ENCODE measurements at regions of chr6 and their contacts with region 1.

Region 1: GRCh38 chr6:149513915-149514314 is 29.1 kb upstream of the ZC3H12D start:
- DNase-seq: no peak
- ATAC-seq: no peak
- H3K4me3 ChIP-seq: no peak overlapping the region
- H3K27ac ChIP-seq: no peak overlapping the region
- H3K4me1 ChIP-seq: no peaks in the 10 kb centered on the region
- H3K27me3 ChIP-seq: no peaks in the 10 kb centered on the region
- CTCF ChIP-seq: no peak
- POLR2A ChIP-seq: no peak
- RAD21 ChIP-seq: no peak

Region 2: DNA sequence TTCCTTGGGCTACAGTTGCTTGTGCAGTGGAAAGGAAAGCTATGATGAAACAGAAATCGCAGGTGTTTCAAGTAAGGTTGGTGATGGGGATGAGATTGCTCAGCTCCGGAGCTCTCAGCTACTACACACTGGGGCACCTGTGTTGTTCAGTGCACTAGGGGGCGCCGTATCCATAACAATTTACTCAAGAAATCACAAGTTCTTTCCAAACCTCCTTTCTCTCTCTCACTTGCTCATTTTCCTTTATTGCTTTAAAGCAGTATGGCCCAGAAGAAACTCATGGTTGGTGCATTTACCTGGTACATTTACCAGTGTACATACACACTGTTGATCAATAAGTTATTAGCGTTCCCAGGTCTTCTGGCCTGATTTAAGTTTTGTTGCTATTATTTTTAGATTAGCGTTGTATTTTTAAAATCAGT is 431.6 kb before region 1 on chr6:
- CTCF ChIA-PET with region 1: interaction called, 7 read pairs
- POLR2A ChIA-PET with region 1: no interaction called
- RAD21 ChIA-PET with region 1: no interaction called
- intact Hi-C with region 1: loop called (anchors 1 kb)
- DNase-seq: peak; percentile 57
- ATAC-seq: peak; percentile 97
- H3K4me3 ChIP-seq: no peak overlapping the region
- H3K27ac ChIP-seq: no peak overlapping the region
- H3K4me1 ChIP-seq: no peaks in the 10 kb centered on the region; a peak in 1 of 4 replicates
- H3K27me3 ChIP-seq: no peaks in the 10 kb centered on the region
- CTCF ChIP-seq: peak; percentile 68 to 84 (median 79); a peak in 5 of 6 replicates
- POLR2A ChIP-seq: no peak
- RAD21 ChIP-seq: peak; percentile 95

Region 3: DNA sequence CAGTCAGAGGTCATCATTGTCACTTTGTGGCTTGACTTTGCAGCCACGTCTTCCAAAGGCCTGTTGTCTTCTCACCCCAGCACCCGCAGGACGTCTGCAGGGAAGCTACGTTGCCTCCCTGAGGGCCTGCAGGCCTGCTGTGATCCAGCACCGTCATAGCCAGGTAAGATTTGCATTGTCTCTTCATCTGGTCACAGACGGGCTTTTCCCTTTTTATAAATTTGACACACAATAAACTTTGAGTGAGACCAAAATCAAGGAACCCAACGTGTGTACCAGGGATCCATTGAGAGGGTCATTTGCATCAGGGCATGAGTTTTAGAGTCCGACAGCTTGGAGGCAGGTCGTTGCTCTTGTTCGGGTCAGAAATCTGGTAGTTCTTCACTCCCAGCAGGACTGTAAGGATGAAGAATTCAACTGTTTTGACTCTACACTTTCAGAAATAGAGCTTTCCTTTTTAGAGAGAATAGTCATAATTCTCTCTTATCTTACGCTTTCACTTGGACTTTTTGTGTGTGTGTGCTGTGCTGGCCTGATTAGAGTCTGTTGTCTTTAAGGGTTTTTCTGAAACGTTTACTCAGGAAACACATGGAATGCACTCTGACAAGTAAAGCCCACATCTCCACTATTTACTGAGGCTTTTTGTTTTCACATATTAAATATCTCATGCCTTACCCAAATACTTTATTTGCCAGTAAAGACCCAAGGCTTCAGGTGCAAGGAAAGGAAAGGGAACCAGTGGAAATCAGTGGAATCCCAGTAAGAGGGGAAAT is 373.6 kb before region 1 on chr6:
- CTCF ChIA-PET with region 1: no interaction called
- POLR2A ChIA-PET with region 1: no interaction called
- RAD21 ChIA-PET with region 1: no interaction called
- intact Hi-C with region 1: no loop called
- DNase-seq: no peak
- ATAC-seq: no peak
- H3K4me3 ChIP-seq: no peak overlapping the region
- H3K27ac ChIP-seq: no peak overlapping the region
- H3K4me1 ChIP-seq: no peaks in the 10 kb centered on the region
- H3K27me3 ChIP-seq: no peaks in the 10 kb centered on the region
- CTCF ChIP-seq: no peak
- POLR2A ChIP-seq: no peak
- RAD21 ChIP-seq: no peak

Region 4: DNA sequence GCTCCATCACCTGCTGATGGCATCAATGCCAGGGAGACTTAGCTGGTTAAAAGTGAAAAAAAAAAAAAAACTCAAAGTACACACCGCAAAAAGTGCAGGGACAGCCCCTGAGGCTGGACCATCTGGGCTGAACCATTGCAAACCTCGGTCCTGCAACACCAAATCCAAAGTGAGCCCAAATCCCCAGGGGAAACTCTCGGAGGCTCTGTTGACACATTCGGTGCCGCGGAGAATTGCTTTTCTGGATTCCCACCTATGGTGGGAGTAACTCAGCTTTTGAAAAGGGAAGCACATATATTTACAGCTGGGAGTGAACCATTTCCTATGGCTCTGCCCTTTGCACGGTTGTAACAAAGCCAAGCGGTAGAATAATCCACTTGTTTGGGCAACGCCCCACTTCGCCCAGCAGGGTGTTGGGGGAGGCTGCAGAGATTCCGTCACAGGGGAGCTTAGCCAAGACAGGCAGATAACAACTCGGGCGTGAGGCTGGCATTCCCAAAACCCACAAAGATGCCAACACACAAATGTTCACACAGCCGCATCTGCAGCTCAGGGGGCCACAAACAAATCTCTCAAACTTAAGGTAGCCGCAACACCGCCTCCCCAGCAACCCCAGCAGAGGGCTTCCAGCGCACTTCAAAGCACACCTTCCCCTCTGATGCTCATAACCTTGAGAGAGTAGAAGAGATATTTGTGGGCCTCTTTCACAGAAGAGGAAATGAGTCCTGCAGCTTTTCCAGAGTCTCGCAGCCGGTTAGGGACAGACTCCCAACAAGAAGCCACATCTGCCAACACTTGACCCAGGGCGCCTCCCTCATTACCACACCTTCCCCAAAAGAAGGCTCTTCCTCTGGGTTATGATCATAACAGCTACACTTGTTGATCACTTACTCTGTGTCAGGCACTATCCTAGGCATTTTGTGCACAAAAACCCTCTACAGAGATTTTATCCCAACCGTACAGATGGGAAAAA is 40.5 kb before region 1 on chr6:
- CTCF ChIA-PET with region 1: no interaction called
- POLR2A ChIA-PET with region 1: no interaction called
- RAD21 ChIA-PET with region 1: no interaction called
- intact Hi-C with region 1: no loop called
- DNase-seq: no peak
- ATAC-seq: no peak; the same call in 1 of the 2 replicates
- H3K4me3 ChIP-seq: no peak overlapping the region
- H3K27ac ChIP-seq: no peak overlapping the region
- H3K4me1 ChIP-seq: no peaks in the 10 kb centered on the region; a peak in 1 of 4 replicates
- H3K27me3 ChIP-seq: no peaks in the 10 kb centered on the region
- CTCF ChIP-seq: no peak
- POLR2A ChIP-seq: no peak
- RAD21 ChIP-seq: no peak

Measured in HCT116 (cell line).